ENCODE measurements at regions of chr10 and their contacts with region 1.

Region 1: DNA sequence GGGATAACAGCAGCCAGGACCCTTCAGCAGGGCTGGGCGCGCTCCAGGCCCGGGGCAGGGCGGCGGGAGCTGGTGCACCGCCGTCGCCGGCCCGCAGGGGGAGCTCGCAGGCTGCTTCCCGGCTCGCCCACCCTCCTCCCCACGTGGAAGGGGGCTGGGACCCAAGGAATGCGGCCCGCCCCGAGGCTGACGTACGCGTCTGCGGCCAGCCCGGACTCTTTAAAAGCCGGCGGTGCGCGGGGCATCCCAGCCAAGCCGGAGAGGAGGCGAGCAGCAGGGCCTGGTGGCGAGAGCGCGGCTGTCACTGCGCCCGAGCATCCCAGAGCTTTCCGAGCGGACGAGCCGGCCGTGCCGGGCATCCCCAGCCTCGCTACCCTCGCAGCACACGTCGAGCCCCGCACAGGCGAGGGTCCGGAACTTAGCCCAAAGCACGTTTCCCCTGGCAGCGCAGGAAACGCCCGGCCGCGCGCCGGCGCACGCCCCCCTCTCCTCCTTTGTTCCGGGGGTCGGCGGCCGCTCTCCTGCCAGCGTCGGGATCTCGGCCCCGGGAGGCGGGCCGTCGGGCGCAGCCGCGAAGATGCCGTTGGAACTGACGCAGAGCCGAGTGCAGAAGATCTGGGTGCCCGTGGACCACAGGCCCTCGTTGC is at the start of gene PFKFB3:
- DNase-seq: peak; percentile 94 to 96
- H3K4me3 ChIP-seq: peak within 1 kb of the TSS; percentile 41 to 84 (median 70)
- H3K27ac ChIP-seq: peak within 1 kb of the TSS; percentile 24 to 87 (median 83)
- H3K4me1 ChIP-seq: peaks cover 20 to 30% of the 10 kb centered on the region in 2 donors
- H3K27me3 ChIP-seq: no peaks in the 10 kb centered on the region
- CTCF ChIP-seq: peak; percentile 72 to 99 (median 94)
- POLR2A ChIP-seq: peak; percentile 91 to 99
- total RNA-seq, gene PFKFB3: 8.4 to 11.8 (median 9.4) TPM

Region 2: DNA sequence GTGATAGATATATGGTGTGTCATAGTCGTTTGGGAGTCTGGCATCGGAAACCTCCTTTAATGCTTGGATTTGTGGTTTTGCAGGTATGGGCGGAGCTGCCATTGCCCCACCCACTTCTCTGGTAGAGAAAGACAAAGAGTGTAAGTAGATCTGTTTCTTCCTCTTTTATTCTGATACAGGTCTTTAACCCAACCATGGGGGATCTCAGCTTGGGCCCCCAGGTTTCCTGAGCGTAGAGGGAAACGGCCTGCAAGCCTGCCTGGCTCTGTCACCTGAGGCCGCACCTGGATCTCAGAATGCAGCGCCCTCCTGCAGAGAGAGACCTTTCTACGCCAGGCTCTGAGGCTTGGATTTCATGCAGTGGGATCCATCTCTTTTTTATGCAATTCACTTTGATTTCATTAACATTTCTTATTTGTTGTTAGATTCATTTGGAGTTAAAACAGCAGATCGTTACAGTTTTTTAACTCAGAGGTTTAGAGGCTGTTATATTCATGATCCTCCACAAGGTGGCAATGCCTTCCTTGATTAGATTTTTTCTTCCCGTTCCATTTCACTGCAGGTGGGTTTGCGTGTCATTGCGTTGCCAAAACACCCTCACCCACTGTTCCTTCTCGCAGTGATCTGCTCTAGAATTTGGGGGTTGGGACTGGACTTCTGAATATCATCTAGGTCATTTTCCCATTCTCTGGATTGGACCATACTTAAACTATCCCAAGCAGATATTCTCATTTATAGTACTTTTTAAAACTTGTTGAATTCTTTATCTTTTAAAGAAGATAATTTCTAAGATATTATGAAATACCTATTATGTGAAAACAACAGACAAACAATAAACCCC is 94.0 kb before region 1 on chr10:
- intact Hi-C with region 1: loop called (anchors 5 kb)
- DNase-seq: peak in 1 of 2 donors; percentile 37
- H3K4me3 ChIP-seq: no peak overlapping the region
- H3K27ac ChIP-seq: no peak overlapping the region
- H3K4me1 ChIP-seq: no peaks in the 10 kb centered on the region
- H3K27me3 ChIP-seq: no peaks in the 10 kb centered on the region
- CTCF ChIP-seq: peak; percentile 54 to 84 (median 68)
- POLR2A ChIP-seq: no peak

Region 3: GRCh38 chr10:6144406-6145165 is 58.2 kb before region 1 on chr10:
- intact Hi-C with region 1: loop called (anchors 5 kb)
- DNase-seq: peak; percentile 81 to 87
- H3K4me3 ChIP-seq: peak overlapping the region; percentile 29 to 87 (median 47)
- H3K27ac ChIP-seq: peak overlapping the region in 2 of 3 donors; percentile 72 to 79
- H3K4me1 ChIP-seq: peaks cover 6 to 11% of the 10 kb centered on the region in 2 donors
- H3K27me3 ChIP-seq: no peaks in the 10 kb centered on the region
- CTCF ChIP-seq: no peak
- POLR2A ChIP-seq: peak in 1 of 2 donors; percentile 71

Region 4: DNA sequence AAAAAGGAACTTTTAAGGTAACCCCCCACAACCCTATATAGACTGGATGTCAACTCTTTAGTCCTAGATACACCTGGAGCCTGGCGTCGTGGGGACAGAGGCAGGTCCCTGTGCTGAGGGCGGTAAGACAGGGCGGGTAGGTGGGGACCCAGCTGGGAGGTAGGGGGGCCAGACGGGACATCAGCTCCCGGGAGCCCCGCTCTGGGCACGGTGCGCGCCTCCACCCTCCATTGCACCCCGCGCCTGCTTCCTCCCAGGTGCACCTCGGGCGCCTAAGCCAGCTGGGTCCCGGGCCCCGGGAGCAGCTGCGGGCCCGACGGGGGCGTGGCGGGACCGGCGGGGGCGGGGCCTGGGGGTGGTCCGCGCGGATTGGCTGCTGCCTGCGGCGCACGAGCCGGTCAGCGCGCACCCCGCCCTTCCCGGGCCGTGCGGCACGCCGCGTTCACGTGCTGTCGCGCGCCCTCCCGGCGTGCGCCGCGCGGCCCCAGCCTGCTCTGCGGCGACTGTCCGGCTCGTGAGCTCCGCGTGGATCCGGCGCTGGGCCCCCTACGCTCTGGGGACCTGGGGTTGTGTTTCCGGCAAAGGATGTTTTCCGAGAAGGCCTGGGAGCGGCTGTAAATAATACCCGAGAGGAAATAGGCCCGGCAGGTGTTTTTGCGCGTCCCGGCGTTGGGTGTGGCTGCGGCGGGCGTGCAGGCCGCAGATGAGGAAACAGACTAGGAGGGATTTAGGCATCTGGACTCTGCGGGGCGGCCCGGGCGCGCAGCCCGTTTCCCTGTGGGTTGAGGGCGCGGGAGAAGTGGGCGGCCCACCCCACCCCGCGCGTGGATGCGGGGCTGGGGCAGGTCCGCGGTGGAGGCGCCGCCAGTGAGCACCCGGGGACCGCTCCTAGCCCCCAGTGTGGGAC is 39.2 kb before region 1 on chr10:
- intact Hi-C with region 1: loop called (anchors 5 kb)
- DNase-seq: peak; percentile 92 to 93
- H3K4me3 ChIP-seq: peak overlapping the region; percentile 46 to 88 (median 50)
- H3K27ac ChIP-seq: peak overlapping the region; percentile 60 to 90 (median 81)
- H3K4me1 ChIP-seq: peaks cover 12 to 14% of the 10 kb centered on the region in 2 donors
- H3K27me3 ChIP-seq: no peaks in the 10 kb centered on the region
- CTCF ChIP-seq: peak in 1 of 6 experiments; percentile 24
- POLR2A ChIP-seq: peak in 1 of 2 donors; percentile 70

Region 5: GRCh38 chr10:6351495-6351894 is 148.7 kb after region 1 on chr10:
- intact Hi-C with region 1: no loop called
- DNase-seq: no peak
- H3K4me3 ChIP-seq: no peak overlapping the region
- H3K27ac ChIP-seq: no peak overlapping the region
- H3K4me1 ChIP-seq: peaks cover 0 to 12% of the 10 kb centered on the region in 2 donors
- H3K27me3 ChIP-seq: no peaks in the 10 kb centered on the region
- CTCF ChIP-seq: no peak
- POLR2A ChIP-seq: no peak

Region 6: DNA sequence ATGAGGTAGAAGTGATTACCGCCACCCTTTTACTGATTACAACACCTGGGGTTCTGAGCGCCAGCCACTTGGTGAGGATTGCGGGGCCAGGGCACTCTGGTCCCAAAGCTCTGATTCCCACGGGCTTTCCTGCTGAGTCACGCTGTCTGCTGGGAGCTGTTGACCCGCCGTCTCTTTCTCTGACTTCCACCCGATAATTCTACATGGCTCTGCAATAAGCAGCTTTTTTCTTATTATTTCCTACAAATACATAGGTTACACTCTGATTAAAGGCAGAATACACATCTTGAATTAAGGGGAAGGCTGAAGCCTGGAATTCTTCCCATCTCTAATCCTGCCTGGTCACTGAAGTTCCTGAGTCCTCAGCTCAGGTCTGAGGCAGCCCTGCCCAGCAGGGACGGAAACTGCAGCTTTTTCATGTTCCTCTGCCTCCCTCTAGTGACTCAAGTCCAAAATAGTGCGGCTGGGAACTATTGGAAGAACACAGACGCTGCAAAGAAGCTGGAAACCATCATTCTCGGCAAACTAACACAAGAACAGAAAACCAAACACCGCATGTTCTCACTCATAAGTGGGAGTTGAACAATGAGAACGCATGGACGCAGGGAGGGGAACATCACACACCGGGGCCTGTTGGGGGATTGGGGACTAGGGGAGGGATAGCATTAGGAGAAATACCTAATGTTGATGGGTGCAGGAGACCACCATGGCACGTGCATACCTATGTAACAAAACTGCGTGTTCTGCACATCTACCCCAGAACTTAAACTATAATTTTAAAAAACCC is 198.9 kb after region 1 on chr10:
- intact Hi-C with region 1: loop called (anchors 5 kb)
- DNase-seq: peak; percentile 78 to 83
- H3K4me3 ChIP-seq: peak overlapping the region in 1 of 3 donors; percentile 4
- H3K27ac ChIP-seq: peak overlapping the region in 2 of 3 donors; percentile 36 to 52
- H3K4me1 ChIP-seq: peaks cover 5 to 18% of the 10 kb centered on the region in 2 donors
- H3K27me3 ChIP-seq: no peaks in the 10 kb centered on the region
- CTCF ChIP-seq: peak; percentile 34 to 96 (median 80)
- POLR2A ChIP-seq: no peak